H1 (cell line): ENCODE measurements at regions of chr19 and their contacts with region 1.

Region 1: DNA sequence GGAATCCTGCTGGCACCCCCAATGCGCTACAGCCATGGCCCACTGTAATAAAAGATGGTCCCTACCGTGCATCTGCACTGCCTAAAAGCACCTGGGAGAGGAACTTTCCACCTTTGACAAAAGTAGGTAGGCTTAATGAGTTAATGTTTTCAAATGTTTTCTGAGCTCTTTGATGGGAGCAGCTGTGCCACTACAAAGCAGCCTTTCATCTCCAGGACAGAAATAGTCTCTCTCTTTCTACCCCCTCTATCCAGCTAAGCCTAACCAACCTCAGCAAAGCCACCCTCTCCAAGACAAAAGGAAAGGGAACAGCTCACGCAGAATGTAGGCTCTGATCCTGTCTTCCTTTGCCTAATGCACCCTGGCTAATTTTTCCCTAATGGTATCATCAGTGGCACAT is 560.2 kb downstream of the UQCRFS1 start:
- DNase-seq: no peak
- H3K4me3 ChIP-seq: no peak overlapping the region
- H3K27ac ChIP-seq: no peak overlapping the region
- H3K4me1 ChIP-seq: peaks cover 0 to 5% (median 3%) of the 10 kb centered on the region in 4 experiments; a peak in 3 of 7 replicates
- H3K27me3 ChIP-seq: no peaks in the 10 kb centered on the region
- CTCF ChIP-seq: no peak
- EP300 ChIP-seq: no peak
- POLR2A ChIP-seq: no peak
- RAD21 ChIP-seq: no peak

Region 2: GRCh38 chr19:28619816-28620429 is 32.8 kb before region 1 on chr19:
- CTCF ChIA-PET with region 1: no interaction called
- POLR2A ChIA-PET with region 1: no interaction called
- DNase-seq: no peak
- H3K4me3 ChIP-seq: no peak overlapping the region
- H3K27ac ChIP-seq: no peak overlapping the region
- H3K4me1 ChIP-seq: no peaks in the 10 kb centered on the region
- H3K27me3 ChIP-seq: no peaks in the 10 kb centered on the region
- CTCF ChIP-seq: no peak
- EP300 ChIP-seq: no peak
- POLR2A ChIP-seq: no peak
- RAD21 ChIP-seq: no peak

Region 3: DNA sequence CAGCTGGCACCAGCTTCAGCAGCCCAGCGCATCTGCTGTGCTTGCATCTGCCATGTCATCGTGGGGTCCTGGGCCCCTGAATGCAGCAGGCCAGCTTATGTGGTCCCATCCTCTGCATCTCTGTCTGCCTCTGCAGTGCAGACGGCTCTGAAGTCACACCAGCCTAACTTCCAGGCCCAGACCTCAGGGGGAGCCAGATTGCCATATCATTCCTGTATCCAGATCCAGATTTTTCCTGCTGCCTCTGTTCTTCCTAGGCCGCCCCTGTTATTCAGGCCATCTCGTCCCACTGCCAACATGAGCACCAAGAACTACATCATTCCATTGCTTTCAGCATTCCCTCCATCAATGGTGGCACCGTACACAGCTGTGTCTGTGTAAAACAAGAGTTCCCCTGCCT is 11.4 kb before region 1 on chr19:
- CTCF ChIA-PET with region 1: interaction called, 16 read pairs
- POLR2A ChIA-PET with region 1: interaction called, 3 read pairs
- DNase-seq: no peak
- H3K4me3 ChIP-seq: no peak overlapping the region
- H3K27ac ChIP-seq: no peak overlapping the region
- H3K4me1 ChIP-seq: no peaks in the 10 kb centered on the region
- H3K27me3 ChIP-seq: no peaks in the 10 kb centered on the region
- CTCF ChIP-seq: peak in 1 of 3 experiments; percentile 23; a peak in 2 of 4 replicates
- EP300 ChIP-seq: no peak
- POLR2A ChIP-seq: no peak
- RAD21 ChIP-seq: peak in 1 of 2 experiments; percentile 34; a peak in 3 of 4 replicates

Region 4: DNA sequence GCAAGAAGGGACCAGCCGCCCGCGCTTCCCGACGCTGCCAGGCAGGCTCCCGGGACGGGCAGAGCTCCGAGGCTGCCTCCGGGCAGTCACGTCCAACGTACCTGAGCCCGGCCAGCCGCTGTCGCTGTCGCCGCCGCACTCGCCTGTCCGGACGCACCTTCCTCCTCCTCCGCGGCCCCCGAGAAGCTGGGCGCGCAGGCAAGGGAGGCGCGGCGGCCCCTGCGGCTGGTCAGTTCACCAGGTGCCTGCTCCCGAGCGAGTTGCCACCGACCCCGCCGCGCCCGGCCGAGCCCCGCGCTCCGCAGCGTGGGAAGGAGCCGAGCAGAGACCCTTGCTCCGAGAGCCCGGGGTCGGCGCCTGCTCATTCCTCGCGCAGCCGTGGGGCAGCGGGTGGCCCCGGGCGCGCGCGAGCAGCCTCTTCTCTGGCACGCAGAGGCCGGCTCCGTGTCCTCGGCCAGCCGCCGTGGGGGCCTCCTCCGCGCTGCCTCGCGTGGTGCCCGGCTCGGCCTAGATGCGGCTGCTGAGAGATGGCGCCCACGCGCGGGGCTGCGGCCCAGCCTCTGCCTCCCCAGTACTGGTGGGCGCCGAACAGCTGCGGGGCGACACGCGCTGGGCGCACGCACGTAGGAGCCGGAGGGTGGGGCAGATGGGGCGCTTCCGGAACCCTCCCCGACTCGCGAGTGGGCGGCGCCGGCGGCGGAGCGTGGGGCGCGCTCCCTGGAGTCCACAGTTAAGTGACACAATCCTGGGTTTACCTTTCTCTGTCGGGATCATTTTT is 140.8 kb after region 1 on chr19:
- CTCF ChIA-PET with region 1: no interaction called
- POLR2A ChIA-PET with region 1: no interaction called
- DNase-seq: peak; percentile 7 to 67
- H3K4me3 ChIP-seq: peak overlapping the region; percentile 35 to 68 (median 63)
- H3K27ac ChIP-seq: no peak overlapping the region
- H3K4me1 ChIP-seq: no peaks in the 10 kb centered on the region; a peak in 2 of 7 replicates
- H3K27me3 ChIP-seq: peaks cover 10 to 23% (median 15%) of the 10 kb centered on the region in 4 experiments; a peak in 6 of 7 replicates
- CTCF ChIP-seq: no peak
- EP300 ChIP-seq: no peak
- POLR2A ChIP-seq: no peak
- RAD21 ChIP-seq: no peak